ENCODE measurements at regions of chr2 and their contacts with region 1.

Region 1: DNA sequence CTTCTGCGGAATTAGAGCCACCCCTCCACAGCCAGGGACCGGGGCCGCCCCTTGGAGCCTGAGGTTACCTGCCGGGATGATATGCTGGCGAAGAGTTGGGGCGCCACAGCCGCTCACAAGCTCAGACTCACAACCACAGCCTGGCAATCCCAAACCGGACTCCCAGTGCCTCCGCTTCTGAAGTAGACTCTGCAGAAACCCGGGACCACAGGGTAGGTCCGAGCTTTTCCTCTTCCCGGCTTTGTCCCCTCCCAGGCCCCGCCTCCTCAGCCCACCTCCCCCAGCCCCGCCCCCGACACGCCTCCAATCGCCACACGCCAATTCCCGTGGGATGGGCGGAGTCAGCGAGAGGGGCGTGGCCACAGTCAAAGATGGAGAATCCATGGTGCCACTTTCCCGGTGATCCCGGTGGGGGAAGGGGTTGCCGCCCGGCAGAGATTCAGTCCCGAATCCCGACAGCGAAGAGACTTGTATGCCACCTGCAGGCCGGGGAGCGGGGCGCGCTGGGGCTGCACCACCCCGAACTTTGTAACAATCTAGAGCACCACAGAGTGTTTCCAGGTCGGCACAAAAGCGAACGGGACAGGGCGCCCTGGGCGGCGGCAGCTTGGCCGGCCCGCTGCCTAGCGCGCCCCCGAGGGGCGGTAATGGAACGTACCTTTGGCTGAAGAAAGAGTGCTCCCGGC is at the start of gene IDH1:
- DNase-seq: peak; percentile 99
- H3K4me3 Mint-ChIP-seq: peak within 1 kb of the TSS; percentile 100
- H3K27ac Mint-ChIP-seq: peak within 1 kb of the TSS; percentile 91
- H3K4me1 Mint-ChIP-seq: peaks cover 27% of the 10 kb centered on the region
- H3K27me3 Mint-ChIP-seq: no peaks in the 10 kb centered on the region
- CTCF ChIP-seq: peak; percentile 68
- total RNA-seq, gene IDH1: 166 TPM in 2 replicates

Region 2: GRCh38 chr2:208006833-208007232 is 248.2 kb before region 1 on chr2:
- CTCF ChIA-PET with region 1: no interaction called
- intact Hi-C with region 1: no loop called
- DNase-seq: no peak
- H3K4me3 Mint-ChIP-seq: no peak overlapping the region
- H3K27ac Mint-ChIP-seq: no peak overlapping the region
- H3K4me1 Mint-ChIP-seq: no peaks in the 10 kb centered on the region
- H3K27me3 Mint-ChIP-seq: no peaks in the 10 kb centered on the region
- CTCF ChIP-seq: no peak

Region 3: GRCh38 chr2:208101716-208102631 is 153.0 kb before region 1 on chr2:
- CTCF ChIA-PET with region 1: interaction called, 25 read pairs
- intact Hi-C with region 1: loop called (anchors 1 kb)
- DNase-seq: peak; percentile 10
- H3K4me3 Mint-ChIP-seq: peak overlapping the region; percentile 14
- H3K27ac Mint-ChIP-seq: no peak overlapping the region
- H3K4me1 Mint-ChIP-seq: peaks cover 17% of the 10 kb centered on the region
- H3K27me3 Mint-ChIP-seq: peaks cover 10% of the 10 kb centered on the region
- CTCF ChIP-seq: no peak

Region 4: GRCh38 chr2:208265801-208266552 is 11.0 kb after region 1 on chr2 and contains the start of gene PIKFYVE:
- CTCF ChIA-PET with region 1: interaction called, 14 read pairs
- intact Hi-C with region 1: no loop called
- DNase-seq: peak; percentile 92
- H3K4me3 Mint-ChIP-seq: peak within 1 kb of the TSS; percentile 90
- H3K27ac Mint-ChIP-seq: peak within 1 kb of the TSS; percentile 84
- H3K4me1 Mint-ChIP-seq: peaks cover 24% of the 10 kb centered on the region
- H3K27me3 Mint-ChIP-seq: no peaks in the 10 kb centered on the region
- CTCF ChIP-seq: no peak
- total RNA-seq, gene PIKFYVE: 24.2 and 26.4 TPM in 2 replicates